ENCODE measurements at regions of chr2 and their contacts with region 1.

Region 1: DNA sequence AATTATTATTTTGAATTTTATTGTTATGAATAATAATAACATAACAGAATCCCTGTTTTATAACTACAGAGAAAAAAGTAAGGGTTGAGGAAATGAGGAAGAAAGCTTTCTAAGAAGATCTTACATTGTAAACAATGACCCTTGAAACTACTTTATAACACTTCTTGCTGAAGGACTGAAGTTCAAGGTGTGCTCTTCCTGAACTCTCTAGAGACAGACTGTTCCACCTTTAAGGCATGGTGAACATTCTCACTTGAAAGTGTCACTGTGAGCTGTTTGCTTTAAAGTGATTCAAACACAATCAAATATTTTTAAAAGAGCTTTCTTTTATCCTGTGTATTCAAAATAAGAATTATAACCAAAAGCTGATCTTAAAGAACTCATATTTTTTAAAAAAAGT is 131.5 kb downstream of the DNAH7 start:
- DNase-seq: no peak
- H3K4me3 Mint-ChIP-seq: no peak overlapping the region
- H3K27ac Mint-ChIP-seq: no peak overlapping the region
- H3K4me1 Mint-ChIP-seq: no peaks in the 10 kb centered on the region
- H3K27me3 Mint-ChIP-seq: peaks cover 2% of the 10 kb centered on the region

Region 2: DNA sequence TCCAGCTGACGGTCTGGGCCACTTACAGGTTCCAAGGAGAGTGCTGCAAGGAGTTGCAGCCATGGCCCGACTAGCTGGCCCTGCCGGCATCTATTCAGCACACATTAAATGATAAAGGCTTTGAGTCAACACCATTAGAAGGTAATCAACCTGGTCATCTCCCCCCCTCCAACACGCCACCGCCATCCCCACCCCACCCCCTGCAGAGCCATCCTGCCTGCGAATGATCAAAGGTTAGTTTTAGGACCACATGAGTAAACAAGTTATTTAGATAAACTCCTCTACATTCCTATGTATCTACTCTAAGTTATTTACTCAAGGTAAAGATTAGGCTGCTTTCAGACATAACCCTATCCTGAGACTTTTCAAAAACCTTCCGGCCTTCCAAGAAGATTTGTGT is 629.4 kb before region 1 on chr2:
- CTCF ChIA-PET with region 1: no interaction called
- POLR2A ChIA-PET with region 1: no interaction called
- intact Hi-C with region 1: loop called (anchors 5 kb)
- DNase-seq: no peak
- H3K4me3 Mint-ChIP-seq: no peak overlapping the region
- H3K27ac Mint-ChIP-seq: no peak overlapping the region
- H3K4me1 Mint-ChIP-seq: no peaks in the 10 kb centered on the region
- H3K27me3 Mint-ChIP-seq: no peaks in the 10 kb centered on the region

Region 3: GRCh38 chr2:195664528-195664927 is 272.6 kb before region 1 on chr2:
- CTCF ChIA-PET with region 1: interaction called, 4 read pairs
- POLR2A ChIA-PET with region 1: no interaction called
- intact Hi-C with region 1: loop called (anchors 2 kb)
- DNase-seq: no peak
- H3K4me3 Mint-ChIP-seq: no peak overlapping the region
- H3K27ac Mint-ChIP-seq: peak overlapping the region; percentile 18
- H3K4me1 Mint-ChIP-seq: peaks cover 55% of the 10 kb centered on the region
- H3K27me3 Mint-ChIP-seq: no peaks in the 10 kb centered on the region